Dendritic cell treated with granulocyte-macrophage colony-stimulating factor and Interleukin-4, amounts not matched to agents 40 ng/mL and 50 ng/mL, for 4 days (primary cell): ENCODE measurements at regions of chr11 and their contacts with region 1.

Region 1: GRCh38 chr11:130069684-130070108 is at the start of gene APLP2:
- H3K4me3 Mint-ChIP-seq: peak within 1 kb of the TSS; percentile 82
- H3K27ac Mint-ChIP-seq: peak within 1 kb of the TSS; percentile 95
- H3K4me1 Mint-ChIP-seq: peaks cover 43% of the 10 kb centered on the region
- H3K27me3 Mint-ChIP-seq: no peaks in the 10 kb centered on the region

Region 2: DNA sequence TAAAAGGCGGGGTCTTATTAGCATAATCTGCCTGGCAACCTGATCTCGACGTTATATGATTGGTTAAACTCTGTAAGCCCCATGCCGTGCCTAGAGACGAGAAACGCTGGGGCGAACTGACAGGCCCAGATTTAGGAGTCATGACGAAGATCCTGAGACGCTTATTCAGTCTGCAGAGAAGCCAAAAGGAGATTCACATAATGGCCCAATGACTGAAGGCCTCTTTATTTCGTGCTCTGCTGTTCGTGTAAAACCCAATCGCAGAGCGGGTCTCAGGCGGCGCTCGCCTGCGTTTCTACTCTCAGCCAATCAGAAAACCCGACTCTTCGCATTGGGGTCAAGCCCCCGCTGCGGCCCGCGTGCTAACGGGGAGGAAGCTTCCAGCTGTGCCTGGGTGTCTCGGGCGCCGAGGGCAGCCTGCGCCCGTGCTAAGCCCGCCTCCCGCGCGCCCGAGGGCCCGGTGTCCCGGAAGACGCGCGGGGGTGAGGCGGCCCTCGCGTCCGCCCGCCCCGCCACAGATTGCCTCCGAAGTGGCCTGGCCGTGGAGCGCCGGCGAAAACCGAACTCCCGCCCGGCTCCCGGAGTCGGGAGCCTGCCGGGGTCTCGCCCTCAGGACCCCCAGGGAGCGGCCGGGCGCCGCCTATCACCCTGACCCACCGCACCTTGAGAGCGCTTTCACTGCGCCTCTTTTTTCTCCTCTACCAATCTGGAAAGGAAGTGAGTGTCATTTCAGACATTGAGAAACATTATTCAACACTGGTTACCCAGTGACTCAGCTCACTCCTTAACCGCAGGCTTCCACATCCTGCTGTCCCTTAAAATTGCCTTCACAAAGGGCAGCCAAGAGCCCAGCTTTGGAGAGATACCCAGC is 66.6 kb before region 1 on chr11:
- intact Hi-C with region 1: loop called (anchors 1 kb)
- H3K4me3 Mint-ChIP-seq: peak overlapping the region; percentile 95
- H3K27ac Mint-ChIP-seq: peak overlapping the region; percentile 100
- H3K4me1 Mint-ChIP-seq: peaks cover 40% of the 10 kb centered on the region
- H3K27me3 Mint-ChIP-seq: no peaks in the 10 kb centered on the region

Region 3: DNA sequence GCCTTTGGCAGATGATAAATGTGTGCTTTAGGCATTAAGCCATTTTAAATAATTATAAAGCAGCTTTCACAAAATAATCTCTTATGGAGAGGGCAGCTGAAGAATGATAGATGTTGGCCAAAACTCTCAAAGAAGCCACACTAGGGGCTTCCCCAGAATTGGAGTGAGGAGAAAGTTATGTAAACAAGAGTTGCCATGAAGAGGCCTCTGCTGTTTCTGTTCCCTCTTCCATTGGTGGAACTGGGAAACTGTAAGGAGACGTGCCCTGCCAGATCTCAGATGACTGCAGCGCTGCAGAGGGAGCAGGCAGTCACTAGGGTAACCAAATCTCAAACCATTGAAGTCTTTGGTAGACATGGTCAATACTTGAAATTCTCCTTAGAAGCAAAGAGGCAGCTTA is 19.4 kb before region 1 on chr11:
- intact Hi-C with region 1: loop called (anchors 2 kb)
- H3K4me3 Mint-ChIP-seq: no peak overlapping the region
- H3K27ac Mint-ChIP-seq: peak overlapping the region; percentile 71
- H3K4me1 Mint-ChIP-seq: peaks cover 22% of the 10 kb centered on the region
- H3K27me3 Mint-ChIP-seq: no peaks in the 10 kb centered on the region

Region 4: GRCh38 chr11:130087294-130087926 is 17.7 kb after region 1 on chr11:
- intact Hi-C with region 1: no loop called
- H3K4me3 Mint-ChIP-seq: peak overlapping the region; percentile 49
- H3K27ac Mint-ChIP-seq: peak overlapping the region; percentile 81
- H3K4me1 Mint-ChIP-seq: peaks cover 56% of the 10 kb centered on the region
- H3K27me3 Mint-ChIP-seq: no peaks in the 10 kb centered on the region

Region 5: GRCh38 chr11:130166457-130166784 is 96.7 kb after region 1 on chr11:
- intact Hi-C with region 1: no loop called
- H3K4me3 Mint-ChIP-seq: no peak overlapping the region
- H3K27ac Mint-ChIP-seq: no peak overlapping the region
- H3K4me1 Mint-ChIP-seq: peaks cover 62% of the 10 kb centered on the region
- H3K27me3 Mint-ChIP-seq: peaks cover 12% of the 10 kb centered on the region